Activated CD4-positive, alpha-beta T cell treated with anti-CD3 and anti-CD28 coated beads for 36 hours (primary cell): ENCODE measurements at regions of chr19 and their contacts with region 1.

Region 1: DNA sequence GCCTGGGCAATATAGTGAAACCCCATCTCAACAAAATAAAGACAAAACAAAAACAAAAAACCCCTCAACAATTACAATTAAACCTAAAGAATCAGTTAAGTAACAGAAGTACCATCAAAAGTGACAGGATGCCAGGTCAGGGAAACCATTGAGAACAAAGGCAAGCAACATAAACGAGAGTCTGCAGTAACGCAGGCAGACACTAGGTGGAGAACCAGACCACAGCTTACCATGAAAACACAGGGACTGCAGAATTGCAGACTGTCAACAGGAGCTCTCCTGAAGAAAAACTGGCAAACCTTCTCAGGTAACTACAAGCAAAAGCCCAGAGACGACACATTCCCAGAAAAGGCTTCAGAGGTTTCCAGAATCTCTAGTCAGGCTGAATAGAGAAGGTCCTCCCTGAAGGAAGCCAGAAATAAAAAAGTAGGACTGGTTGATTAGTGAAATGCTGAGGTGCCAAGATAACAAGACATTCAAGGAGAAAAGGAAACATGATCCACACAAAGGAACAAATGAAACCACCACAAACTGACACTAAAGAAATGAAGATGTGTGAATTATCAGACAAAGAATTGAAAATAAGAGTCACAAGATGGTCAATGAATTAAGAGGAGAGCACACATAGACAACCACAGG is 2.2 kb upstream of the ZNF665 start:
- DNase-seq: peak; percentile 83
- ATAC-seq: peak; percentile 50
- H3K4me3 Mint-ChIP-seq: peak overlapping the region; percentile 22
- H3K27ac Mint-ChIP-seq: peak overlapping the region; percentile 8
- H3K4me1 Mint-ChIP-seq: peaks cover 33% of the 10 kb centered on the region
- H3K27me3 Mint-ChIP-seq: no peaks in the 10 kb centered on the region

Region 2: DNA sequence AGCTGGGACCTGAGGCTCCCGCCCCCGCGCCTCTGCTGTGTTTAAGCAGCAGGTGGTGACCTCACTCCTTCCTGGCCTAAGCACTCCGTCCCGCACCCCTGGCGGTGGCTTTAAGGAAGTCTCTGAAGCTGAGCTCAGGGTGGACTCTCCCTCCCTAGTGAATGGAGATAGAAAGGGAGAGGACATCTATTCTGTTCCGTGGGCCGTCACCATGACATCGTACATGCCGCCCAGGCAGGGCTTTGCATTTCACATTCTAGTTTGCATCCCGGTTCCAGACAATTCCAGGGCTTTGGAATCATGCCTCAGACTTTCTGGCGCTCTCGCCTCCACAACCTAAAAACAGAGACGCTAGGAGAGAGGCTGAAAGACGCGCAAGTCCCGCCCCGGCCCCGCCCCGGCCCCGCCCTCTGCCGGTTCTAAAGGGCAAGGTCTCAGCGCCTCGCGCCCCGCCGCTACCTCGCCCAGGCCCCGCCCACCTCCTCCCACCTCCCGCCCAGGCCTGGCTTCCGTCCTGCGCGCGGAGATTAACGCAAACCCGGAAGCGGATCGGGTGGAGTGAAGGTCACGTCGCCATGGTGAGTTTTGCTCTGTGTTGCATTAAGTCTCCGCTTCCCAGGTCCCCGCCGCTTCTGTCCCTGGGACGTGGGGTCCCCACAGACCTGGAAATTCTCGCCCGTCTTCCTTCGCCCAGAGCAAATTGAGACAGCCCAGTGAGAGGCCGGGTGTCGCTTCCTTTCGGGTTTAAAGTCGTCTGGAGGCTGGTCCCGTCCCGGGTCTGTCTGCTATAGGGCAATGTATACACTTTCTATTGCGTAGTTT is 668.0 kb before region 1 on chr19 and contains the start of gene ZNF808:
- CTCF ChIA-PET with region 1: no interaction called
- POLR2A ChIA-PET with region 1: no interaction called
- intact Hi-C with region 1: loop called in 1 of 2 experiments (anchors 1 kb)
- DNase-seq: peak; percentile 99
- ATAC-seq: peak; percentile 92
- H3K4me3 Mint-ChIP-seq: peak within 1 kb of the TSS; percentile 91
- H3K27ac Mint-ChIP-seq: peak within 1 kb of the TSS; percentile 94
- H3K4me1 Mint-ChIP-seq: peaks cover 23% of the 10 kb centered on the region
- H3K27me3 Mint-ChIP-seq: no peaks in the 10 kb centered on the region
- total RNA-seq, gene ZNF808: 25.7 to 29.9 TPM

Region 3: DNA sequence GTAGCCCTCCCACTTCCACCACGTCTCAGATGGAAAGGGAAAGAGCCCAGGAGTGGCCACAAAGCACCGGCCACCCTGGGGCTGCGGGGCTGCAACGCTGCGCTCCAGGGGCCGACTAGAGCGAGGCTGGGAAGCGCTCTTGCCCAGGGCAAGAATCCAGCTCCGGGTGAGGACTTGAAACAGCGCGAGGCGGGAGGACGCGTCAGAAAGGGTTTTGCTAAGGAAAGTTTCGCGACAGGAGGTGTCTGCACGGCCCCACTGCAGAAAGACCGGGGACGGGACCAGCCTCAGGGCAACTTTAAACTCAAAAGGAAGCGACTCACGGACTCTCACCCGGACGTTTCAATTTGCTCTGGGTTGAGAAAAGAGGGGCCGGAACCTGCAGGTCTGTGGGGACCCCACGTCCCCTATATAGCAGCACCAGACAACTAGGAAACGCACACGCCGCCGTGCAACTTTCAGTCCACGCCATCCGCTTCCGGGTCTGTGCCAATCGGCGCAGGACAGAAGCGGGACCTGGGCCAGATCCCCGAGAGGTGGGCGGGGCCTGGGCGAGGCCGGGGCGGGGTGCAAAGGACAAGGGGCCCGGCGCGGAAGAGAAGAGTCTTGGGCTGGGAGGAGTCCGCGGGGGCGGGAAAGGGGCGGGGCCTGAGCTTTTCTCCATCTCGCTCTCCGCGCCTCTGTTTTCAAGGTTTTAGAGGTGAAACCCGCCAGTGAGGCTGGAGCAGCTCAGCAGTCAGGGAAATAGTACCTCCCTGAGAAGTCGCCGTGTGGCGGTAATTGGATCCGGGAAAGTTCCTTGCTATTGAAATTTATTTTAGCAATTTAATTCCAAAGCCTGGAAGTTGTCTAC is 232.8 kb before region 1 on chr19 and contains the start of gene ZNF816:
- CTCF ChIA-PET with region 1: no interaction called
- POLR2A ChIA-PET with region 1: no interaction called
- intact Hi-C with region 1: loop called (anchors 1 to 5 kb)
- DNase-seq: peak; percentile 100
- ATAC-seq: peak; percentile 100
- H3K4me3 Mint-ChIP-seq: peak within 1 kb of the TSS; percentile 96
- H3K27ac Mint-ChIP-seq: peak within 1 kb of the TSS; percentile 96
- H3K4me1 Mint-ChIP-seq: peaks cover 26% of the 10 kb centered on the region
- H3K27me3 Mint-ChIP-seq: no peaks in the 10 kb centered on the region
- total RNA-seq, gene ZNF816: 10.7 to 11.4 TPM

Region 4: GRCh38 chr19:53254411-53255341 is 59.3 kb after region 1 on chr19 and contains the start of gene ZNF677:
- CTCF ChIA-PET with region 1: no interaction called
- POLR2A ChIA-PET with region 1: no interaction called
- intact Hi-C with region 1: loop called in 1 of 2 experiments (anchors 1 kb)
- DNase-seq: peak; percentile 92
- ATAC-seq: peak; percentile 100
- H3K4me3 Mint-ChIP-seq: peak within 1 kb of the TSS; percentile 84
- H3K27ac Mint-ChIP-seq: peak within 1 kb of the TSS; percentile 53
- H3K4me1 Mint-ChIP-seq: peaks cover 10% of the 10 kb centered on the region
- H3K27me3 Mint-ChIP-seq: no peaks in the 10 kb centered on the region
- total RNA-seq, gene ZNF677: 6.4 to 7.5 TPM

Region 5: DNA sequence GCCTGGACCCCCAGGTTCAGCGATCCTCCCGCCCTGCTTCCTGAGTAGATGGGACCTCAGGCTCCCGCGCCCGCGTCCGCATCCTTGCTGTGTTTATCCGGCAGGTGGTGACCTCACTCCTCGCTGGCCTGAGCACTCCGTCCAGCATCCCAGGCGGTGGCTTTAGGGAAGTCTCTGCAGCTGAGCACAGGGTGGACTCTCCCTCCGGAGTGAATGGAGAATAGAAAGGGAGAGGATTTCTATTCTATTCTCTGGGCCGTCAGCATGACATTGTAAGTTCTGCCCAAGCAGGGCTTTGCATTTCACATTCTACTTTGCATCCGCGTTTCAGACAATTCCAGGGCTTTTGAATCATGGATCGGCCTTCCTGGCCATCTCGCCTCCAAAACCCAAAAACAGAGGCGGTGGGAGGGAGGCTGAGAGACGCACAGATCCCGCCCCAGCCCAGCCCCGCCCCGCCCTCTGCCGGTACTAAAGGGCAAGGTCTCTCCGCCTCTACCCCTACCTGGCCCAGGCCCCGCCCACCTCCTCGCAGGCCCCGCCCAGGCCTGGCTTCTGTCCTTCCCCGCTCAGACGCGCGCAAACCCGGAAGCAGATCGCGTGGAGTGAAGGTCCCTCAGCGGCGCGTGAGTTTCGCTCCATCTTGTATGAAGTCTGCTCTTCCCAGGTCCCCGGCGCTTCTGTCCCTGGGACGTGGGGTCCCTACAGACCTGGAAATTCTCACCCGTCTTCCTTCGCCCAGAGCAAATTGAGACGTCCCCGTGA is 169.9 kb after region 1 on chr19 and contains the start of gene ZNF525:
- CTCF ChIA-PET with region 1: interaction called, 4 read pairs
- POLR2A ChIA-PET with region 1: no interaction called
- intact Hi-C with region 1: loop called (anchors 1 kb)
- DNase-seq: peak; percentile 98
- ATAC-seq: peak; percentile 100
- H3K4me3 Mint-ChIP-seq: peak within 1 kb of the TSS; percentile 93
- H3K27ac Mint-ChIP-seq: peak within 1 kb of the TSS; percentile 95
- H3K4me1 Mint-ChIP-seq: peaks cover 26% of the 10 kb centered on the region
- H3K27me3 Mint-ChIP-seq: no peaks in the 10 kb centered on the region
- total RNA-seq, gene ZNF525: 21.5 to 27.8 TPM

Region 6: GRCh38 chr19:53467485-53468262 is 272.3 kb after region 1 on chr19 and contains the start of gene ZNF813:
- CTCF ChIA-PET with region 1: no interaction called
- POLR2A ChIA-PET with region 1: no interaction called
- intact Hi-C with region 1: loop called in 1 of 2 experiments (anchors 1 kb)
- DNase-seq: peak; percentile 98
- ATAC-seq: peak; percentile 98
- H3K4me3 Mint-ChIP-seq: peak within 1 kb of the TSS; percentile 80
- H3K27ac Mint-ChIP-seq: peak within 1 kb of the TSS; percentile 87
- H3K4me1 Mint-ChIP-seq: peaks cover 20% of the 10 kb centered on the region
- H3K27me3 Mint-ChIP-seq: peaks cover 9% of the 10 kb centered on the region
- total RNA-seq, gene ZNF813: 5.8 to 7.4 TPM

Region 7: DNA sequence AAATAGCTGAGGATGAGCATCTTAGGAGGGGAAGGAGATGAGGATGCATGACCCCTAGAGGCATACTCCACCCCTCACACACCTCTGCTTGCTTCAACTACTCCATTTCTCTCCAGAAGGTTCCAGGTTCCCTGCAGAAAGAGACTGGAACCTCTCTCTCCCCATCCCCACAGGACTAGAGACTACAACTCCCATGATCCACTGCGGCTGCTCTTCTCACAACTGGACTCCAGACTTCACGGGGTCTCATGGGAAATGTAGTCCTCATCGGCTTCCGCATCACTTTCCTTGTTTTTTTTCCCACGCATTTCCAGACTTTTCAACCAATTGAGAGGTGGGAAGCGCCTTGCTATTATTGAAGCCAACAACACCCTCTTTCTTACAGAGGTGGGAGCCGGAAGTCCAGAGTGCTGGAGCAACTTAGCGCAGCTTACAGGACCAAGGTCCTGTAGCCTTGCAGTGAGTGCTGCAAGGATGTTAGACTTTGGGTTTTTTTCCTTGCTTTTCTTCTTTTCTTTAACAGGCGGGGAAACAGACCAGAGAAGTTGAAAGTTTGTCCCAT is 782.1 kb after region 1 on chr19:
- CTCF ChIA-PET with region 1: no interaction called
- POLR2A ChIA-PET with region 1: no interaction called
- intact Hi-C with region 1: loop called in 1 of 2 experiments (anchors 10 kb)
- DNase-seq: peak; percentile 79
- ATAC-seq: peak; percentile 61
- H3K4me3 Mint-ChIP-seq: peak overlapping the region; percentile 59
- H3K27ac Mint-ChIP-seq: no peak overlapping the region
- H3K4me1 Mint-ChIP-seq: peaks cover 30% of the 10 kb centered on the region
- H3K27me3 Mint-ChIP-seq: peaks cover 53% of the 10 kb centered on the region